Aorta (tissue), 5 donors: ENCODE measurements at regions of chr17 and their contacts with region 1.

Region 1: GRCh38 chr17:47295062-47295845 is 28.5 kb upstream of the EFCAB13 start:
- DNase-seq: no peak
- ATAC-seq: peak; percentile 2
- H3K4me3 ChIP-seq: no peak overlapping the region
- H3K27ac ChIP-seq: peak overlapping the region; percentile 58 to 86
- H3K4me1 ChIP-seq: peaks cover 0 to 9% of the 10 kb centered on the region in 2 donors
- H3K27me3 ChIP-seq: no peaks in the 10 kb centered on the region

Region 2: GRCh38 chr17:47253541-47254402 is 41.5 kb before region 1 on chr17 and contains the start of gene ITGB3:
- intact Hi-C with region 1: loop called in 1 of 2 experiments (anchors 5 kb)
- DNase-seq: peak; percentile 86 to 96
- ATAC-seq: peak; percentile 93
- H3K4me3 ChIP-seq: peak within 1 kb of the TSS; percentile 83 to 94
- H3K27ac ChIP-seq: peak within 1 kb of the TSS; percentile 59 to 96
- H3K4me1 ChIP-seq: peaks cover 4 to 8% of the 10 kb centered on the region in 2 donors
- H3K27me3 ChIP-seq: no peaks in the 10 kb centered on the region
- total RNA-seq, gene ITGB3: 79.5 to 210 TPM

Region 3: GRCh38 chr17:47279062-47279736 is 16.1 kb before region 1 on chr17:
- intact Hi-C with region 1: loop called in 1 of 2 experiments (anchors 2 kb)
- DNase-seq: peak; percentile 88 to 90
- ATAC-seq: peak; percentile 88
- H3K4me3 ChIP-seq: no peak overlapping the region
- H3K27ac ChIP-seq: peak overlapping the region; percentile 91 to 100
- H3K4me1 ChIP-seq: peaks cover 5 to 15% of the 10 kb centered on the region in 2 donors
- H3K27me3 ChIP-seq: no peaks in the 10 kb centered on the region

Region 4: DNA sequence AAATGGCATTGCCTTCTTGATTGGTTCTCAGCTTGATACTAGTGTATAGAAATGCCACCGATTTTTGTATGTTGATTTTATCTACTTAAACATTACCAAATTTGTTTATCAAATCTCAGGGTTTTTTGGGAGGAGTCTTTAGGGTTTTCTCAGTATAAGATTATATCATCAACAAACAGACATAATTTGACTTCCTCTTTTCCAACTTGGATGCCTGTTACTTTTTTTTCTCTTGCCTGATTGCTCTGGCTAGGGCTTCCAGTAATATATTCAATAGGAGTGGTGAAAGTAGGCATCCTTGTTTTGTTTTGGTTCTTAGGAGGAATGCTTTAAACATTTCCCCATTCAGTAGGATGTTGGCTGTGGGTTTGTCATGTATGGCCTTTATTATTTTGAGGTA is 57.6 kb after region 1 on chr17:
- intact Hi-C with region 1: no loop called
- DNase-seq: no peak
- ATAC-seq: no peak
- H3K4me3 ChIP-seq: no peak overlapping the region
- H3K27ac ChIP-seq: no peak overlapping the region
- H3K4me1 ChIP-seq: no peaks in the 10 kb centered on the region
- H3K27me3 ChIP-seq: no peaks in the 10 kb centered on the region